ENCODE measurements at regions of chr17 and their contacts with region 1.

Region 1: GRCh38 chr17:49031965-49032928 is 35.1 kb downstream of the IGF2BP1 start:
- DNase-seq: peak; percentile 74
- H3K4me3 Mint-ChIP-seq: peak overlapping the region; percentile 2
- H3K27ac Mint-ChIP-seq: no peak overlapping the region
- H3K4me1 Mint-ChIP-seq: peaks cover 11% of the 10 kb centered on the region
- H3K27me3 Mint-ChIP-seq: no peaks in the 10 kb centered on the region
- CTCF ChIP-seq: peak; percentile 90

Region 2: GRCh38 chr17:48505787-48506645 is 526.2 kb before region 1 on chr17:
- CTCF ChIA-PET with region 1: no interaction called
- intact Hi-C with region 1: no loop called
- DNase-seq: peak; percentile 66
- H3K4me3 Mint-ChIP-seq: no peak overlapping the region
- H3K27ac Mint-ChIP-seq: no peak overlapping the region
- H3K4me1 Mint-ChIP-seq: peaks cover 17% of the 10 kb centered on the region
- H3K27me3 Mint-ChIP-seq: peaks cover 35% of the 10 kb centered on the region
- CTCF ChIP-seq: peak; percentile 27

Region 3: GRCh38 chr17:48671697-48672171 is 360.5 kb before region 1 on chr17:
- CTCF ChIA-PET with region 1: interaction called, 5 read pairs
- intact Hi-C with region 1: loop called (anchors 5 kb)
- DNase-seq: peak; percentile 86
- H3K4me3 Mint-ChIP-seq: peak overlapping the region; percentile 36
- H3K27ac Mint-ChIP-seq: no peak overlapping the region
- H3K4me1 Mint-ChIP-seq: no peaks in the 10 kb centered on the region
- H3K27me3 Mint-ChIP-seq: no peaks in the 10 kb centered on the region
- CTCF ChIP-seq: peak; percentile 95

Region 4: GRCh38 chr17:48791128-48792032 is 240.9 kb before region 1 on chr17:
- CTCF ChIA-PET with region 1: interaction called, 11 read pairs
- intact Hi-C with region 1: no loop called
- DNase-seq: peak; percentile 95
- H3K4me3 Mint-ChIP-seq: no peak overlapping the region
- H3K27ac Mint-ChIP-seq: peak overlapping the region; percentile 57
- H3K4me1 Mint-ChIP-seq: peaks cover 41% of the 10 kb centered on the region
- H3K27me3 Mint-ChIP-seq: peaks cover 25% of the 10 kb centered on the region
- CTCF ChIP-seq: peak; percentile 82

Region 5: DNA sequence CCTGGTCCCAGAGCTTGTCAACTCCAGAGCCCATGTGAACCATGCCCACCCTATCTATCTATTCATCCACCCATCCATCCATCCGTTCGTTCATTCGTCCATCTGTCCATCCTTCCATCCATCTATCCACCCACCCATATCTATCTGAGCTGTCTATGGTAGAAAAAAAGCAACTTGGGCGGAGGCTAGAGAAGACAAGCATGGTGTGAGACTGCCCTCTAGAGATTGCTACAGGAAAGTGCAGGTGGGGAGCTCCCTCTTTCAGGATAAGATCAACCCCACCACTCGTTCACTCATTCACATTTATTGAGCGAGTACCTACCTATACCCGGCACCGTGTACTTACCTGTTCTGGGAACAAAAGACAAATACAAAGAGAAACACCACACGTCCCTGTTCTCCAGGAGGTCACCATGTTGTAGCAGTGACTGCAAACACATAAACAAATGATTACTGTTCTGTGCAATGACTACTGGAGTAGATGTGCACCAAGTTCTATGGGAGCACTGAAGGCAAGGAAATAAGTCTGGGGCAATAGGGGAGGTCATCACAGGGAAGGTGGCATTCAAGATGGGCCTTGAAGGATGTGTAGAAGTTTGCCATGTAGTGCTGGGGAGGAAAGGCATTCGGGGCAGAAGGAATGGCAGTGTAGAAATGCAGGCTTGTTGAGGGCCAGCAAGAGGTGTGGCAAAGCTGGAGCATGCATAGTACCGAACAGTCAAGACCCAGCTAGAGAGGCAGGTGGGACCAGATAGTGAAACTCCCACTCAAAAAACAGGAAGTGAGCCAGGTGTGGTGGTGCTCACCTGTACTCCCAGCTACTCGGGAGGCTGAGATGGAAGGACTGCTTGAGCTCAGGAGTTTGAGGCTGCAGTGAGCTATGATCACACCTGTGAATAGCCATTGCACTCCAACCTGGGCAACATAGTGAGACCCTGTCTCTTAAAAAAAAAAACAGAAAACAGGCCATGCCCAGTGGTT is 153.0 kb before region 1 on chr17:
- CTCF ChIA-PET with region 1: interaction called, 23 read pairs
- intact Hi-C with region 1: no loop called
- DNase-seq: peak; percentile 77
- H3K4me3 Mint-ChIP-seq: no peak overlapping the region
- H3K27ac Mint-ChIP-seq: no peak overlapping the region
- H3K4me1 Mint-ChIP-seq: no peaks in the 10 kb centered on the region
- H3K27me3 Mint-ChIP-seq: no peaks in the 10 kb centered on the region
- CTCF ChIP-seq: peak; percentile 96

Region 6: GRCh38 chr17:48954300-48954755 is 77.9 kb before region 1 on chr17:
- CTCF ChIA-PET with region 1: interaction called, 20 read pairs
- intact Hi-C with region 1: loop called (anchors 1 kb)
- DNase-seq: peak; percentile 73
- H3K4me3 Mint-ChIP-seq: no peak overlapping the region
- H3K27ac Mint-ChIP-seq: no peak overlapping the region
- H3K4me1 Mint-ChIP-seq: peaks cover 10% of the 10 kb centered on the region
- H3K27me3 Mint-ChIP-seq: peaks cover 11% of the 10 kb centered on the region
- CTCF ChIP-seq: peak; percentile 63

Region 7: GRCh38 chr17:49013311-49014213 is 18.7 kb before region 1 on chr17:
- CTCF ChIA-PET with region 1: interaction called, 11 read pairs
- intact Hi-C with region 1: no loop called
- DNase-seq: peak; percentile 27
- H3K4me3 Mint-ChIP-seq: peak overlapping the region; percentile 90
- H3K27ac Mint-ChIP-seq: peak overlapping the region; percentile 89
- H3K4me1 Mint-ChIP-seq: peaks cover 19% of the 10 kb centered on the region
- H3K27me3 Mint-ChIP-seq: peaks cover 79% of the 10 kb centered on the region
- CTCF ChIP-seq: no peak

Region 8: GRCh38 chr17:49108318-49108717 is 76.1 kb after region 1 on chr17:
- CTCF ChIA-PET with region 1: no interaction called
- intact Hi-C with region 1: no loop called
- DNase-seq: no peak
- H3K4me3 Mint-ChIP-seq: no peak overlapping the region
- H3K27ac Mint-ChIP-seq: no peak overlapping the region
- H3K4me1 Mint-ChIP-seq: peaks cover 29% of the 10 kb centered on the region
- H3K27me3 Mint-ChIP-seq: no peaks in the 10 kb centered on the region
- CTCF ChIP-seq: no peak

Measured in Calu3 (cell line).